Heart left ventricle (tissue), 16 donors: ENCODE measurements at regions of chr18 and their contacts with region 1.

Region 1: GRCh38 chr18:75309564-75309963 is 99.0 kb downstream of the TSHZ1 start:
- DNase-seq: no peak
- ATAC-seq: no peak
- H3K4me3 ChIP-seq: no peak overlapping the region
- H3K27ac ChIP-seq: no peak overlapping the region
- H3K4me1 ChIP-seq: no peaks in the 10 kb centered on the region
- H3K27me3 ChIP-seq: no peaks in the 10 kb centered on the region
- CTCF ChIP-seq: no peak
- POLR2A ChIP-seq: no peak

Region 2: GRCh38 chr18:75364512-75365253 is 55.1 kb after region 1 on chr18:
- intact Hi-C with region 1: loop called in 1 of 10 experiments (anchors 10 kb)
- DNase-seq: no peak
- ATAC-seq: peak; percentile 56 to 78 (median 68)
- H3K4me3 ChIP-seq: no peak overlapping the region
- H3K27ac ChIP-seq: no peak overlapping the region
- H3K4me1 ChIP-seq: peaks cover 0 to 5% (median 0%) of the 10 kb centered on the region in 12 donors
- H3K27me3 ChIP-seq: peaks cover 0 to 10% (median 0%) of the 10 kb centered on the region in 9 donors
- CTCF ChIP-seq: no peak
- POLR2A ChIP-seq: no peak